ENCODE measurements at regions of chr1 and their contacts with region 1.

Region 1: GRCh38 chr1:26794391-26794790 is 6.6 kb downstream of the PIGV start:
- DNase-seq: no peak
- H3K4me3 ChIP-seq: no peak overlapping the region
- H3K27ac ChIP-seq: no peak overlapping the region
- H3K4me1 ChIP-seq: peaks cover under 1% of the 10 kb centered on the region
- H3K27me3 ChIP-seq: no peaks in the 10 kb centered on the region
- CTCF ChIP-seq: no peak

Region 2: DNA sequence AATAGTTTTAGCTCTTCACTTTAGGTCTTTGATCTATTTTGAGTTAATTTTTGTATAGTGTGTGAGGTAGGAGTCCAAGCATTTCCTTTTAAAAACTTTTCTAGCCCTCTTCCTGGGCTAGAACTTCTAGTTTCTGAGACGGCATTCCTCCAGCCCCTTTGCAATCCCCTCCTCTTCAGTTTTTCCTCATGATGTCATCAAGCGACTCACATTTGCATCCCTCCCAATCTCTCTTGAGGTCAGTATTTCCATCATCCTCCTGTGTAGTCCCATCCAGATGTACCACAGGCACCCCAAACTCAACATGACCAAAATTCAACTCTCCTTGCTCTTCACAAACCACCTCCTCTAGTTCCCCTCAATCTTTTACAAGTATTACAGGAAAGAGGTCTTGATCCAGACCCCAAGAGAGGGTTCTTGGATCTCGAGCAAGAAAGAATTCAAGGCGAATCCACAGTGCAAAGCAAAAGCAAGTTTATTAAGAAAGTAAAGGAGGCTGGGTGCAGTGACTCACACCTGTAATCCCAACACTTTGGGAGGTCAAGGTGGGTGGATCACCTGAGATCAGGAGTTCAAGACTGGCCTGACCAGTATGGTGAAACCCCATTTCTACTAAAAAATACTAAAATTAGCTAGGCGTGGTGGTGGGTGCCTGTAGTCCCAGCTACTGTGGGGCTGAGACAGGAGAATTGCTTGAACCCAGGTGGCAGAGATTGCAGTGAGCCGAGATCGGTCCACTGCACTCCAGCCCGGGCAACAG is 311.3 kb before region 1 on chr1:
- CTCF ChIA-PET with region 1: no interaction called
- POLR2A ChIA-PET with region 1: no interaction called
- intact Hi-C with region 1: no loop called
- DNase-seq: no peak
- H3K4me3 ChIP-seq: no peak overlapping the region
- H3K27ac ChIP-seq: no peak overlapping the region
- H3K4me1 ChIP-seq: no peaks in the 10 kb centered on the region
- H3K27me3 ChIP-seq: no peaks in the 10 kb centered on the region
- CTCF ChIP-seq: no peak

Region 3: GRCh38 chr1:26705788-26706311 is 88.5 kb before region 1 on chr1:
- CTCF ChIA-PET with region 1: no interaction called
- POLR2A ChIA-PET with region 1: interaction called, 17 read pairs
- intact Hi-C with region 1: no loop called
- DNase-seq: no peak
- H3K4me3 ChIP-seq: no peak overlapping the region
- H3K27ac ChIP-seq: peak overlapping the region; percentile 7
- H3K4me1 ChIP-seq: peaks cover 48% of the 10 kb centered on the region
- H3K27me3 ChIP-seq: no peaks in the 10 kb centered on the region
- CTCF ChIP-seq: no peak

Region 4: GRCh38 chr1:26853156-26853555 is 58.8 kb after region 1 on chr1:
- CTCF ChIA-PET with region 1: no interaction called
- POLR2A ChIA-PET with region 1: no interaction called
- intact Hi-C with region 1: no loop called
- DNase-seq: peak; percentile 83
- H3K4me3 ChIP-seq: no peak overlapping the region
- H3K27ac ChIP-seq: no peak overlapping the region
- H3K4me1 ChIP-seq: no peaks in the 10 kb centered on the region
- H3K27me3 ChIP-seq: no peaks in the 10 kb centered on the region
- CTCF ChIP-seq: peak; percentile 91

Measured in A673 (cell line).